Dorsolateral prefrontal cortex (tissue), 120 donors: ENCODE measurements at regions of chr3 and their contacts with region 1.

Region 1: DNA sequence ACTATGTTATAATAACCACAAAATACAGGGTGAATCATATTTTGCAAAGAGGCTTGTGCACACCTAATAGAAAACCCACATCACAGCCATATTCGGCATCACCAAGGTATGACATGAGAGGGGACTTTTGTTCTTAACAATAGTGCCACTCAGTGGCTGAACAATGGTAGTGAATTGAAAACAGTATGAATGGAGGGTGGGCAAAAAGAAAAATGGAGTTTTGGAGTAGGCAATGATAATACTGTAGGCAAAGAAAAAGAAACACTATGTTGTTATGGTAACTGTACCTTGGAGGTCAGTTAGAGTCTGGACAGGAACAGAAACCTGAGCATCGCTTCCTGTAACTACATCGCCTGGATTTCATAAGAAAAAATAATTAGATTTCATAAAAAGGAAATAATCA is 348.6 kb downstream of the PLCL2 start:
- DNase-seq: peak in 1 of 10 donors; percentile 39
- H3K4me3 ChIP-seq: peak overlapping the region in 8 of 59 donors; percentile 5 to 44 (median 12)
- H3K27ac ChIP-seq: peak overlapping the region in 5 of 59 donors; percentile 25 to 66 (median 33)
- H3K27me3 ChIP-seq: no peaks in the 10 kb centered on the region
- CTCF ChIP-seq: peak; percentile 51 to 92 (median 82)

Region 2: DNA sequence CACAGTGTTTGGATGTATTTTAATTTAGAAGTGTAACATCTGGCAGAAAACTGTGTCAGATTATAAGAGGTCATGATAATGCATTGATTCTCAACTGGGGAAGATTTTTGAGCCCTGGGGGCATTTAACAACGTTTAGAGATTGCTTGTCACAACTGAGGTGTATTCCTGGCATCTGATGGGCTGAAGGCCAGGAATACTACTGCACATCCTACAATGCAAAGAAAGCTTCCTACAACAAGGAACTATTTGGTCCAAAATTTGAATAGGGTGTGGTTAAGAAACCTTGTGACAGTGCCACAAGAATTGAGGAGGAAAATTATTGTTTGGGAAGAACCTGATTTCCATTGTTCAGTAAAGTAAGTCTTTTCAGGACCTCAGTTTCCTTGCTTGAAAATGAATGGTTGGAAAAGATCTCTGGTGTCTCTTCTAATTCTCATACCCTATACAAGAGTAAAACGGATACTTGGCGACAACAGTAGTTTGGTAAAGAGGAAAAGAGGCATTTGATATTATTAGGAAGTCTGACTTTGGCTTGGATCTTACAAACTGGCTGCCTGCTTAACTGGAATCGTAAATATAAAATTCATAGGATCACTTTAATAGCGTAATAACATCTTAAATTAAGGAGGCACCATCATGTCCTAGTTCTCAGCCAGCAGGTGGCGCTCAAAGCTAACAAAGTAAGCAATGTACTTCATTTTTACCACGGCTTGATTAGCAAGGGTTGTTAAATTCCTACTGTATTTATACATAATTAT is 632.4 kb before region 1 on chr3:
- intact Hi-C with region 1: loop called in 1 of 2 experiments (anchors 2 kb)
- DNase-seq: peak; percentile 56 to 90 (median 78)
- H3K4me3 ChIP-seq: peak overlapping the region in 37 of 59 donors; percentile 1 to 50 (median 27)
- H3K27ac ChIP-seq: no peak overlapping the region
- H3K27me3 ChIP-seq: no peaks in the 10 kb centered on the region
- CTCF ChIP-seq: peak; percentile 85 to 99 (median 94)

Region 3: GRCh38 chr3:17055374-17056276 is 177.8 kb before region 1 on chr3:
- intact Hi-C with region 1: no loop called
- DNase-seq: no peak
- H3K4me3 ChIP-seq: no peak overlapping the region
- H3K27ac ChIP-seq: peak overlapping the region in 3 of 59 donors; percentile 15 to 37 (median 24)
- H3K27me3 ChIP-seq: no peaks in the 10 kb centered on the region
- CTCF ChIP-seq: no peak

Region 4: DNA sequence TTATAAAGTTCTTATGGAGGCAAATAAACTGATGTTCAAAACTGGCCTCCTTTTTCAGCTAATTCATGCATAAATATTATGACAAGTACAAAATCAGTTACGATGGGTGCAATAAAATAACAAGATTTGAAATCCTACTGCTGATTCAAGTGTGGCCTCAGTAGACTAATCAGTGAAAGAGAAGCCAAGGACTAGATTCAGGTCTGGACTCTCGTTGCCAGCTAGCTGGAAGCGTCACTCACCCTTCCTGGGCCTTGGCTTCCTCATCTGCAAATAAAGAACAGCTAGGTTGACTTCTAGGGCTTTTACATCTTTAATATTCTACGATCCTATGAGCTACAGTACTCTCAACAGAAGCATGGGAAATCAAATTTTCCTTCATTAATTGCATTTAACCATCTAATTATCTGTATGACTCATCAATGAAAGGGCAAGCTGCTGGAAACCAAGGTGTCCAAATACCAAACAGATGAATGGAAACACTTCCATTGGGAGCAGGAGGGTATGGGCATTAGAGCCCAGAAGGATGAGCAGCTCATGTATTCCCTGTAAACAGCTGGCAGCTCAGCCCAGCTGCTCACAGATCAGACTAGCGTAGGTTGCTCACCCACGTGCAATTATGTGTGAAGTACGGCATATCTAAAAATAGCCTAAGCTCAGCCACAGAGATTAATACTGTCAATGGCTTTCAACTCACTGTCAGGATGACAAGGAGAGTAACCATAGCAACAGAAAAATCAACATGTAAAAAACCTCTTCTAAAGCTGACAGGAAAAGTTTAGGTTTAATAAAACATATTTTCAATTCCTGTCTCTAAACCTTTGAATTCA is 53.8 kb before region 1 on chr3:
- intact Hi-C with region 1: loop called in 1 of 2 experiments (anchors 5 kb)
- DNase-seq: no peak
- H3K4me3 ChIP-seq: no peak overlapping the region
- H3K27ac ChIP-seq: no peak overlapping the region
- H3K27me3 ChIP-seq: no peaks in the 10 kb centered on the region
- CTCF ChIP-seq: no peak

Region 5: DNA sequence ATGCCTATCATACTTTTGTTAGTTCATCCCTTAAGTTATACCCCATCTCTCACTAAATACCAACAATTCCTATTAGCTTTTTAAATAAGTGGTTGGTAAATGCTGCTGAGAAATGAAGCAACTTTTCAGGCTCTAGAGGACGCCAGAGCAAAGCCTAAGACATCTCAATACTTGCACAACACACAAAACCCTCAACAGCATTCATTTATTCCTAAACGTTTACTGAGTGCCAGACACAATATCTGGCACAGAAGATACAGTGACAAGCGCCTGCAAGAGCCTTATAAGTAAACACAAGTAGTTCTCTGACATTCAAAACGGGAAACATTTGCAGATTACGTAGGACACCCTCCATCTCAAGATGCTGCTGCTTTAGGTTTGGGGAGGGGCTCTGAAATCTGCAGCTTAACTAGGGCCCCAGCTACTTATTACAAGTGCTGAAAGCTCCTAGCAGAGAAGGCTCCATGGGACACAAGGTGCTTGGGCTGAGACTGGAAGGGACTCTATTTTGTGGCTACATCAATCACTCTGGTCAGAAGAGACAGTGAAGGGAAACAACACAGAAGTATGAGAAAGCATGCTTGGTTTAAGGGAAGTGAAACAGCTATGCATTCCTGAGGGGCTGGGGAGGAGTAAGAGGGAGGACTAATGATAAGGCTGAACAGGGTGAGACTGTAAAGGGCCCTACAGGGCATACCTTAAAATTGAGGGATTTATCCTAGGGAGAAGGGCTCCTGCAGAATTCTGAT is 37.4 kb before region 1 on chr3:
- intact Hi-C with region 1: loop called in 1 of 2 experiments (anchors 5 kb)
- DNase-seq: no peak
- H3K4me3 ChIP-seq: peak overlapping the region in 10 of 59 donors; percentile 1 to 19 (median 6)
- H3K27ac ChIP-seq: peak overlapping the region in 58 of 59 donors; percentile 24 to 95 (median 86)
- H3K27me3 ChIP-seq: no peaks in the 10 kb centered on the region
- CTCF ChIP-seq: peak in 52 of 56 donors; percentile 13 to 69 (median 44)

Region 6: GRCh38 chr3:17207019-17207418 is 26.4 kb before region 1 on chr3:
- intact Hi-C with region 1: no loop called
- DNase-seq: no peak
- H3K4me3 ChIP-seq: no peak overlapping the region
- H3K27ac ChIP-seq: peak overlapping the region in 1 of 59 donors; percentile 32
- H3K27me3 ChIP-seq: no peaks in the 10 kb centered on the region
- CTCF ChIP-seq: no peak

Region 7: GRCh38 chr3:17261633-17262369 is 28.4 kb after region 1 on chr3:
- intact Hi-C with region 1: no loop called
- DNase-seq: no peak
- H3K4me3 ChIP-seq: no peak overlapping the region
- H3K27ac ChIP-seq: no peak overlapping the region
- H3K27me3 ChIP-seq: no peaks in the 10 kb centered on the region
- CTCF ChIP-seq: no peak

Region 8: GRCh38 chr3:17302774-17303173 is 69.4 kb after region 1 on chr3:
- intact Hi-C with region 1: no loop called
- DNase-seq: no peak
- H3K4me3 ChIP-seq: no peak overlapping the region
- H3K27ac ChIP-seq: peak overlapping the region in 5 of 59 donors; percentile 1 to 69 (median 45)
- H3K27me3 ChIP-seq: no peaks in the 10 kb centered on the region
- CTCF ChIP-seq: no peak